Heart right ventricle (tissue), 16 donors: ENCODE measurements at regions of chr18 and their contacts with region 1.

Region 1: GRCh38 chr18:58953627-58954026 is 89.0 kb downstream of the ZNF532 start:
- DNase-seq: peak; percentile 45 to 69
- ATAC-seq: peak; percentile 80 to 95 (median 90)
- H3K4me3 ChIP-seq: no peak overlapping the region
- H3K27ac ChIP-seq: peak overlapping the region in 6 of 10 donors; percentile 3 to 34 (median 31)
- H3K4me1 ChIP-seq: peaks cover 0 to 31% (median 18%) of the 10 kb centered on the region in 9 donors
- H3K27me3 ChIP-seq: no peaks in the 10 kb centered on the region
- CTCF ChIP-seq: no peak

Region 2: DNA sequence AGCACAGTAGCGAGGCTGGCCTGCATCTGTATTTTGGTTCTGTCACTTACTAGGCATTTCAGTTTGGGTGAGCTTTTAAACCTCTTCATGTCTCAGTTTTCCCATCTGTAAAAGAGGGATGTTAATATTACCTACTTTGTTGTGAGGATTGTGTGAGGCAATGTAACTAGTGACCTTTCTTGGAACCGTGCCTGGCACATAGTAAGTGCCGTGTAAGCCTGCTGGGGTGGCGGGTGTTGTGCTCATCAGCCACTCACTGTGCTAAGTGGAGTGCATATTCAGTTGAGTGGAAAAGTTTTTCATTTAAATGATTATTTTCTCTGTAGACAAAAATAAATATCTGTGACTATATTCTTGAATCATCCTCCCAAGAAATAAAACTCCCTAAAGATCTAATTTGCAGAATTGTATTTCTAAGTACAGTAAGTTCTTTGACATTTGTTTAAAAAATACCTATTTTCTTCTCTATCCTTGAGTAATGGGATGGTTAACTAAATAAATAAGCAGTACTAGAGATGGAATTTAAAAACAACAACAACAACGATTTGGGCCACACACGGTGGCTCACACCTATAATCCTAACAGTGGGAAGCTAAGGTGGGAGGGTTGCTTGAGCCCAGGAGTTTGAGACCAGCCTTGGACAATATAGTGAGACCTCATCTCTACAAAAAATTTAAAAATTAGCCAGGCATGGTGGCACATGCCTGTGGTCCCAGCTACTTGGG is 225.7 kb before region 1 on chr18:
- intact Hi-C with region 1: no loop called
- DNase-seq: peak in 1 of 2 donors; percentile 28
- ATAC-seq: peak in 2 of 8 donors; percentile 71 to 76
- H3K4me3 ChIP-seq: no peak overlapping the region
- H3K27ac ChIP-seq: no peak overlapping the region
- H3K4me1 ChIP-seq: peaks cover 0 to 10% (median 0%) of the 10 kb centered on the region in 9 donors
- H3K27me3 ChIP-seq: no peaks in the 10 kb centered on the region
- CTCF ChIP-seq: no peak

Region 3: DNA sequence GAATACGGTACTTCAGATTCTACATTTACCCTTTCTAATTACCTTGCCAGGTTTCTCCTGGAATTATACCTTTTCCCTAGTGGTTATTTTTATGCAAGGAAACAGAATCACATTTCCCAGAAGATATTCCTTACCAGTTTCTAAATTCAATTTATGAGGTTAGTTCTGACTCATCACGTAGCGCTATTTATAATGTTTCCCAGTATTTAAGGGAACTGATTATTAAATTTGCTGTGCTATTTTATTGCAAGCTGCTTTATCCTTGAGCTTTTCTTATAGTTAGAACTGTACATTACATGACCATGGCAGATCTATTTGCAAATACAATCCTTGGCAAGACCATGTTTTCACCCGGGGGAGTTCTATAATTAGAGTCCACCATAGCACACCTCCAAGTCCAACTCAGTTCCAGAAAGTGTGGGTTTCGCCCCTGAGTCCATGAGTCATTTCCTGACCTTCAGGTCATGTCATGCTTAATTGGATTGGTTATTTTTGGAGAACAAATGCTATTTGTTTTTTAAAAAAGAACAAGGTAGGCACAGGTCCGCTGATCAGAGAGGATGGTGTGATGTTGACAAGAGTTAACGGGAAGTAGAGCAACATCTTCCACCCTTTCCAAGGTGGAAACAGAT is 37.7 kb after region 1 on chr18:
- intact Hi-C with region 1: loop called in 1 of 10 experiments (anchors 5 kb)
- DNase-seq: no peak
- ATAC-seq: peak in 7 of 8 donors; percentile 27 to 78 (median 52)
- H3K4me3 ChIP-seq: no peak overlapping the region
- H3K27ac ChIP-seq: peak overlapping the region in 9 of 10 donors; percentile 70 to 94 (median 87)
- H3K4me1 ChIP-seq: peaks cover 8 to 68% (median 56%) of the 10 kb centered on the region in 9 donors
- H3K27me3 ChIP-seq: no peaks in the 10 kb centered on the region
- CTCF ChIP-seq: no peak

Region 4: DNA sequence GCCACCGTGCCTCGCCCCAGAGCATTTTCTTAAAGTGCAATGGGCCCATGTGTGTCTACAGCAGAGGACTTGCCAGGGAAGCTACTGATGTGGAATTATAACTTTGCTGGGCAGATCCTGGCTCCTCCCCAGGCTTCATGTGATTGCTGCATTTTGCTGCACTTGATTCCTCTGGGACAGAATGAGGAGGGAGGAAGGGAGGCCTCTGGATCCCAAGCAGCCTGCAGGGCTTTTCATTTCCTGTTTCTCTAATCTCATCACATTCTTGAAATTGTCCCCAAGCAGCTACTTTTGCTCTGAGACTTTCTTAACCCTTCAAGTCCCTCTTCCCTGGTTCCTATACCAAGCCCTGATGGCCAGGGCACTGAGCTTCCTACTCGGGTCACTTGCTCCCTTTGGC is 51.6 kb after region 1 on chr18:
- intact Hi-C with region 1: no loop called
- DNase-seq: peak; percentile 48 to 80
- ATAC-seq: peak; percentile 76 to 94 (median 90)
- H3K4me3 ChIP-seq: no peak overlapping the region
- H3K27ac ChIP-seq: peak overlapping the region in 9 of 10 donors; percentile 36 to 88 (median 82)
- H3K4me1 ChIP-seq: peaks cover 7 to 45% (median 24%) of the 10 kb centered on the region in 9 donors
- H3K27me3 ChIP-seq: no peaks in the 10 kb centered on the region
- CTCF ChIP-seq: no peak